Mammary epithelial cell (primary cell): ENCODE measurements at regions of chr9 and their contacts with region 1.

Region 1: DNA sequence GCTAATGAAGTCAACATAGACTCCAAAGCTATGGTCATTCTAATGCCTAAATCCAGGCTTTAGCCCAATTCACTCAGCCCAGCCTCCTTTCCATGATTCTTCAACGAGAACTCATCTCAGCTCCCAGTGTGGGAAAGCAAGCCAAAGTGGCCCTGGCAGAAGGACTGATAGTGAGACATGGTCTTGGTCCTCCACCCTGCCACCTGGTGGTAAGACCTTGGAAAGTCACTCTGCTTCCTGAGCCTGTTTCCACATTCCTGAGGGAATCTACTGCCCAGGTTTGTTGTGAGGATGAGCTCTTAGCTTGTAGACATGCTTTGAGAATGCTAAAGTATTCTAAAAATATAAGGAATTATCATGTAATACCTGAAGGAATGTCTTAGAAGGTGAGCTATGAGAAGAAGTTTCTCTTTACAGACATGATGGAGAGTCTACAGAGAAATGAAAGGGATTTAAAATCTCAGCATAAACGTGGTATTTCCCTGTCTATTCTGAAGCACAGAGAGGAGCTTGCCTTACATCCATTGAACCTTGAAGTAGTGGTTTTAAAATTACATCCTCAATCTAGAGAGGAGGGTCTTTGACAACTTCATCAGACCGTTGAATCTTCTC is 173.5 kb downstream of the TRIM32 start:
- DNase-seq: peak; percentile 66
- H3K4me3 ChIP-seq: no peak overlapping the region
- H3K27ac ChIP-seq: no peak overlapping the region
- H3K4me1 ChIP-seq: peaks cover 27% of the 10 kb centered on the region
- H3K27me3 ChIP-seq: no peaks in the 10 kb centered on the region
- CTCF ChIP-seq: peak; percentile 84 to 87

Region 2: DNA sequence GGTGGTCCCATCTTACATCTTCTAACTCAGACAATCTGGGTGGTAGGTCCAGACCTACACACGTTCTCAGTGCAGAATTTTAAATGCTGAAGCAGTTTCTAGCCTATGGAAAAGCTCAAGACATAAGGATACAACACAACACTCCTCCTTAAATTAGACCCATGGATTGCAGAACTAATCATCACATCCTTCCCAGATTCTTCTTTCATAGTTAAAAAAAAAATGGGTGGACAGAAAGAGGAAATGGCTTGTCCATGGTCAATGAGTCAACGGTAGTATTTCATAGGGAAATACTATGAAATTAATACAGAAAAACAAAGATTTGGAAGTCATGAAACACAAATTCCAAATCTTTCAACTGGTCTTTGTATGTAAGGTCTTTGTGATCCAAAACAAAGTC is 600.1 kb before region 1 on chr9:
- CTCF ChIA-PET with region 1: no interaction called
- dilution Hi-C with region 1: no loop called
- in situ Hi-C with region 1: no loop called
- intact Hi-C with region 1: no loop called
- DNase-seq: no peak
- H3K4me3 ChIP-seq: no peak overlapping the region
- H3K27ac ChIP-seq: no peak overlapping the region
- H3K4me1 ChIP-seq: no peaks in the 10 kb centered on the region
- H3K27me3 ChIP-seq: no peaks in the 10 kb centered on the region
- CTCF ChIP-seq: no peak

Region 3: GRCh38 chr9:116724123-116724522 is 136.5 kb before region 1 on chr9:
- CTCF ChIA-PET with region 1: no interaction called
- dilution Hi-C with region 1: no loop called
- in situ Hi-C with region 1: no loop called
- intact Hi-C with region 1: no loop called
- DNase-seq: no peak
- H3K4me3 ChIP-seq: no peak overlapping the region
- H3K27ac ChIP-seq: no peak overlapping the region
- H3K4me1 ChIP-seq: no peaks in the 10 kb centered on the region
- H3K27me3 ChIP-seq: no peaks in the 10 kb centered on the region
- CTCF ChIP-seq: no peak

Region 4: DNA sequence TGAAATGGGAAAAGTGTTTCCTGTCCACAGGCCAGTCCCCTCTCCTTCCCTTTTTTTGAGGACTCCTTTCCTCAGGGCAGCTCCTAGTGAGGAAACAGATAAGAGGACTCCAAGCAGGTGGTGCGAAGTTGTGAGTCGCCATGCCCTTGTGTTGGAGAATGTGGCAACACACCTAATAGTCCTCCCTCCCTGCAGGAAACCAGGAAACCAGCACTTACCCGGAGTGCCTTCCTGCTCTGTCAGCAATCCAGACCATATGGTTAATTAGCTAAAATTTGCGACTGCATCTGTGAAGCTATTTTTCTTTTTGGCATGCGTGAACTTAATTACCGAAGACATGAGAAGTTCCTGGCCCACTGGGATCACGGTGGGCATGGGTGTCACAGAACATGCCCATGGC is 103.6 kb before region 1 on chr9:
- CTCF ChIA-PET with region 1: no interaction called
- dilution Hi-C with region 1: no loop called
- in situ Hi-C with region 1: no loop called
- intact Hi-C with region 1: no loop called
- DNase-seq: no peak
- H3K4me3 ChIP-seq: no peak overlapping the region
- H3K27ac ChIP-seq: no peak overlapping the region
- H3K4me1 ChIP-seq: no peaks in the 10 kb centered on the region
- H3K27me3 ChIP-seq: no peaks in the 10 kb centered on the region
- CTCF ChIP-seq: no peak

Region 5: DNA sequence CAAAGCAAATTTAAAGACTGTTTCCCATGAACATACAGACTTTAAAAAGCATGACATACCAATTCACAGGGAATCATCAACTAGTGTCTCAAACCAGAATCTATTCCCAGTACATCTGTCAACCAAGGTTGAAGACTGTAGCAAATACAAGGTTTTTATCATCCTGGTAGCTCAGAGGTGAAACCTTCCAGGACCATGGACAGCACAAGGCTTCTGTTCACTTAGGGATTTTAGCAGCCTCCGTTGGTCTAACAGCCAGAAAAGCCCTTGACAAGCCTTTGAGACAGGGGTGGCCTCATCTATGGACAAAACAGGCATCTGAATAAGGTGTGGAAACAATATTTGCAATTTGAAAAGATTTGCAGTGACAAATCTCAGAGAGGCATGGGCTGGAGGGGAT is 54.5 kb before region 1 on chr9:
- CTCF ChIA-PET with region 1: no interaction called
- dilution Hi-C with region 1: no loop called
- in situ Hi-C with region 1: no loop called
- intact Hi-C with region 1: loop called (anchors 10 kb)
- DNase-seq: peak; percentile 29
- H3K4me3 ChIP-seq: no peak overlapping the region
- H3K27ac ChIP-seq: no peak overlapping the region
- H3K4me1 ChIP-seq: peaks cover 9% of the 10 kb centered on the region
- H3K27me3 ChIP-seq: no peaks in the 10 kb centered on the region
- CTCF ChIP-seq: no peak

Region 6: GRCh38 chr9:116837018-116837989 is 23.3 kb before region 1 on chr9:
- CTCF ChIA-PET with region 1: interaction called, 3 read pairs
- dilution Hi-C with region 1: no loop called
- in situ Hi-C with region 1: no loop called
- intact Hi-C with region 1: loop called (anchors 1 kb)
- DNase-seq: peak; percentile 83
- H3K4me3 ChIP-seq: no peak overlapping the region
- H3K27ac ChIP-seq: peak overlapping the region; percentile 92
- H3K4me1 ChIP-seq: peaks cover 28% of the 10 kb centered on the region
- H3K27me3 ChIP-seq: no peaks in the 10 kb centered on the region
- CTCF ChIP-seq: no peak

Region 7: DNA sequence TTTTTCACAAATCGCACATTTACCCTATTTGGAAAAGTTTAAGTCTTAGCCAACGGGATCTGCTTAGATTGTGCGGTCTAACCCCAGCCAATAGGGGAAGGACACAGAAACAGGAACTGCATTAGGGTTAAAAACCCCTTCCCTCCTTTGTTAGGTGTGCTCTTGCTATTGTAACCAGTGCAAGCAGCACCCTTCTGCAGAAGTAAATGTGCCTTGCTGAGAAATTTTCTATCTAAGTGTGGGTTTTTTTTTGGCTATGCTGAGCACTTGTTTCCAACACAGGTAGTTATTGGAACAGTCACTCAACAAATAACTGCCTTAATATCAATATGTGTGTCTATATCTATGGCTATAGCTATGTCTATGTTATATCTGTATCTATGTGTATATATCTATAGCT is 16.5 kb after region 1 on chr9:
- CTCF ChIA-PET with region 1: no interaction called
- dilution Hi-C with region 1: no loop called
- in situ Hi-C with region 1: no loop called
- intact Hi-C with region 1: no loop called
- DNase-seq: no peak
- H3K4me3 ChIP-seq: no peak overlapping the region
- H3K27ac ChIP-seq: no peak overlapping the region
- H3K4me1 ChIP-seq: no peaks in the 10 kb centered on the region
- H3K27me3 ChIP-seq: no peaks in the 10 kb centered on the region
- CTCF ChIP-seq: no peak

Region 8: DNA sequence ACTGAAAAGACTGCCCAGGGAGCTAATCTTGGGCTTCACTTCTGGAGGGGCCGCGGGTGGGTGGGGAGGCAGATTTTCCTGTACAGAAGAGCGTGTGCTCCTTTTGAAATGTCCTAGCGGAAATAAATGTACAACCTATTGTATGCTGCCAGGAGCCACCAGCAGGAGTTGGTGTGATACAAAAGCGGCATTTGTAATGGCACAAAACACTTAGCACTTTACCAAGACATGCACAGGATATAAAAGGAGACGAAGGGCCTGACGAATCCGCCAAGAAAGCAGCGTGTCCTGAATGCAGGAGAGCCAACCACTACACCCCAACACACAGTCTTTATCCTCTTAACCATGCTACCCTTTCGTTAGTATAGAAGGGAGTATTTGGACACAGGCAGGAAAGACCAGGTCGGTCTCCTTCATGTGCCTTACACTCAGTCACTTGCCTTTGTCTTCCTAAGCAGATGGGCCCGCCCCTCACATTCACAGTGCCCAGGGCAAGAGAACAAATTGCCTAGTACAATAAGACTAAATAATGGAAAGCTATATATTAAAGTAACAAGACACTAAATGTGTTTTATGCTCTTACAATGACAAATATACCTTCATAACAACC is 44.6 kb after region 1 on chr9:
- CTCF ChIA-PET with region 1: no interaction called
- dilution Hi-C with region 1: loop called (anchors 5 kb)
- in situ Hi-C with region 1: no loop called
- intact Hi-C with region 1: no loop called
- DNase-seq: no peak
- H3K4me3 ChIP-seq: no peak overlapping the region
- H3K27ac ChIP-seq: no peak overlapping the region
- H3K4me1 ChIP-seq: no peaks in the 10 kb centered on the region
- H3K27me3 ChIP-seq: no peaks in the 10 kb centered on the region
- CTCF ChIP-seq: no peak

Region 9: GRCh38 chr9:117411548-117411947 is 550.9 kb after region 1 on chr9:
- CTCF ChIA-PET with region 1: no interaction called
- dilution Hi-C with region 1: no loop called
- in situ Hi-C with region 1: no loop called
- intact Hi-C with region 1: loop called (anchors 1 kb)
- DNase-seq: peak; percentile 19
- H3K4me3 ChIP-seq: no peak overlapping the region
- H3K27ac ChIP-seq: no peak overlapping the region
- H3K4me1 ChIP-seq: peaks cover 6% of the 10 kb centered on the region
- H3K27me3 ChIP-seq: peaks cover 21% of the 10 kb centered on the region
- CTCF ChIP-seq: peak; percentile 79 to 84